ENCODE measurements at regions of chr4 and their contacts with region 1.

Region 1: DNA sequence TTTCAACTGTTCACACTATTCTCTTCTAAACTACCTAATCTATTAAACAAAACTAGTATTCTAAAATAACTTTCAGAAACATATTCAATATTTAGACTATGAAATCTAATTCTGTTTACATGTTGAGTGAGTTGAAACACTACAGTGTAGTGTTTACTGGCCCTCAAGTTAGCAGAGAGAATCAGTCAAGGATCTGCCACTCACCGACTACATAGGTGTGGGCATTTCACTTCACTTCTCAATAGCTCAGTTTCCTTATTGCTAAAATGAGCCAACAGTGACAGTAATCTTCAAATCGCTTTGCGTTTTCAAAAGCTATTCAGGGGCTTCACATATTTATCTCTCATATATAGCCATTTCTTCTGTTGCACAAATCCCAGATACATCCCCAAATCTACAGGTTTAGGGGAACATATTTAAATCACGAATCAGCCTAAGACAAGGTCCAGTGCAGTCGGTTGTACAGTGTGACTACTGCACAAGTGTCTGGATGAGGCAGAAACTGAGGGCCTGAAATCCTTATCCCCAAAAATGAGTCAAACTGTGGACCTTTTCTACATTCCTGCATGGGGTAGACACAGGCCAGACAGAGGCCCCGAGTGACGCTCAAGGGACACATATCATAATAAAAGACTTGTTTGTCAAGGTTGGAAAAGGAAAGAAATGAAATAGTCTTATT is 129.8 kb downstream of the PPP3CA start:
- DNase-seq: peak; percentile 45
- H3K4me3 ChIP-seq: no peak overlapping the region
- H3K27ac ChIP-seq: peak overlapping the region; percentile 24
- H3K4me1 ChIP-seq: peaks cover 30% of the 10 kb centered on the region
- H3K27me3 ChIP-seq: no peaks in the 10 kb centered on the region
- CTCF ChIP-seq: no peak
- POLR2A ChIP-seq: no peak

Region 2: DNA sequence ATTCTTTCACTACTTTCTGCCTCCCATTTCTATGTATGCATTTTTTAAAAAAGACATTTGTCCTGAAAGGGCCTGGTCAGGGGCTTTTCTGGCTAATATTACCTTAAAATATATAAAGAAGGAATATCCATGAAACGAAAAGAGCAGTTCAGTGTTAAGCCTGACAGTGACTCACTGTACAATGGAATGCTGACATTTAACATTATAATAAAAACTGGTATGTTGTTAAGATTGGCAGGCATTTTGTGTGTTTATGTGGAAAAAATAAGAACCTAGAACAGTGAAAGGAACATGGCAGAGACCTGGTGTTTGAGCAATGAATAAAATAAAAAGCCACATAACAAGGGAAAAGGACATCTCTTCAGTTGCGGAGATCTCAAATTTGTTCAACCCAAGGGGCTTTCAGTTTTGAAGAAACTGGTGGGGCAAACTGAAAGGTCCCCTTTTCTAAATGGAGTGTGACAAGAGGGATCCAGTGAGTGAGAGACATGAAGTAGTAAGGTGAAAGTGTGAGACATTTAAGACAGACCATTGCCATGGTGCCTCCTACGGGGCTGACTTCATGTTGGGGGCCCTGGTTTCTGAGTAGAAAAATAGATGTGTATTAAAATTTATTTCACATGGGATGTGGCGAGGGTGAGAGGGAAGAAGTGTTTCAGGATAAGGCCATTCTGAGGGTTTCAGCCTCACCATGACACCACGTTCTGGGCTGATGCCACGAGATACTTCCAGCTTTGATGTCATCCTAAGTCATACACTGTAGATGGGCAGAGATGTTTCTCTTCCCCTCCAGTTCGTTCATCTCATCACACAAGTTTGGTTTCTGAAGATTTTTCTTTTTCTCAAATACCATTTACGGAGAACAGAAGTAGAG is 195.1 kb before region 1 on chr4:
- CTCF ChIA-PET with region 1: no interaction called
- POLR2A ChIA-PET with region 1: no interaction called
- dilution Hi-C with region 1: no loop called
- intact Hi-C with region 1: no loop called
- DNase-seq: peak; percentile 56
- H3K4me3 ChIP-seq: no peak overlapping the region
- H3K27ac ChIP-seq: peak overlapping the region; percentile 88
- H3K4me1 ChIP-seq: peaks cover 35% of the 10 kb centered on the region
- H3K27me3 ChIP-seq: no peaks in the 10 kb centered on the region
- CTCF ChIP-seq: no peak
- POLR2A ChIP-seq: no peak

Region 3: DNA sequence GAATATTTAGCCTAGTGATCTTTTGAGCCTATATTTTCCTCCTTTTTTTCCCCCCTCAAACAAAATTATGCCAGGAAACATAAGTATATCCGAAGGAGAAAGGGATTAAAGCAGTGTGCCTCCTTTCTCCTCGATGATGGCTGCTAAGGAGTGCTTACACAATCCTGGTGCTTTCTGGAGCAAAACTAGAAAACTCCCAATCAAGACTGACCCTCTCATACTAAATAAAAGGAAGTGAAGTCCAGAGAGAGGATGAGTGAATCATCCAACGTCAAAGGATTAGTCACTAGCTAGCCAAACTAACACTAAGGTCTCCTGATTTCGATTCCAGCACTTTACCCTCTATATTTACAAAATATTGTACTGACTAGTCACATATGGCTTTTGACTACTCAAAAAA is 16.9 kb before region 1 on chr4:
- CTCF ChIA-PET with region 1: interaction called, 12 read pairs
- POLR2A ChIA-PET with region 1: no interaction called
- dilution Hi-C with region 1: no loop called
- intact Hi-C with region 1: no loop called
- DNase-seq: peak; percentile 94
- H3K4me3 ChIP-seq: peak overlapping the region in 1 of 3 experiments; percentile 34
- H3K27ac ChIP-seq: peak overlapping the region; percentile 81
- H3K4me1 ChIP-seq: peaks cover 19% of the 10 kb centered on the region
- H3K27me3 ChIP-seq: no peaks in the 10 kb centered on the region
- CTCF ChIP-seq: no peak
- POLR2A ChIP-seq: no peak

Region 4: GRCh38 chr4:101259876-101260275 is 42.4 kb after region 1 on chr4:
- CTCF ChIA-PET with region 1: no interaction called
- POLR2A ChIA-PET with region 1: no interaction called
- dilution Hi-C with region 1: no loop called
- intact Hi-C with region 1: loop called (anchors 2 kb)
- DNase-seq: peak; percentile 66
- H3K4me3 ChIP-seq: peak overlapping the region in 1 of 3 experiments; percentile 37
- H3K27ac ChIP-seq: no peak overlapping the region
- H3K4me1 ChIP-seq: peaks cover 47% of the 10 kb centered on the region
- H3K27me3 ChIP-seq: no peaks in the 10 kb centered on the region
- CTCF ChIP-seq: no peak
- POLR2A ChIP-seq: no peak

Measured in endothelial cell of umbilical vein (primary cell).